ENCODE measurements at regions of chr22 and their contacts with region 1.

Region 1: GRCh38 chr22:23767673-23768548 is at the start of gene CHCHD10:
- DNase-seq: peak; percentile 78
- H3K4me3 Mint-ChIP-seq: peak within 1 kb of the TSS; percentile 75
- H3K27ac Mint-ChIP-seq: peak within 1 kb of the TSS; percentile 67
- H3K4me1 Mint-ChIP-seq: peaks cover 18% of the 10 kb centered on the region
- H3K27me3 Mint-ChIP-seq: peaks cover 2% of the 10 kb centered on the region
- total RNA-seq, gene CHCHD10: 108 and 111 TPM in 2 replicates

Region 2: GRCh38 chr22:23626286-23626975 is 141.5 kb before region 1 on chr22:
- intact Hi-C with region 1: loop called (anchors 2 kb)
- DNase-seq: no peak
- H3K4me3 Mint-ChIP-seq: no peak overlapping the region
- H3K27ac Mint-ChIP-seq: no peak overlapping the region
- H3K4me1 Mint-ChIP-seq: peaks cover 2% of the 10 kb centered on the region
- H3K27me3 Mint-ChIP-seq: no peaks in the 10 kb centered on the region

Region 3: DNA sequence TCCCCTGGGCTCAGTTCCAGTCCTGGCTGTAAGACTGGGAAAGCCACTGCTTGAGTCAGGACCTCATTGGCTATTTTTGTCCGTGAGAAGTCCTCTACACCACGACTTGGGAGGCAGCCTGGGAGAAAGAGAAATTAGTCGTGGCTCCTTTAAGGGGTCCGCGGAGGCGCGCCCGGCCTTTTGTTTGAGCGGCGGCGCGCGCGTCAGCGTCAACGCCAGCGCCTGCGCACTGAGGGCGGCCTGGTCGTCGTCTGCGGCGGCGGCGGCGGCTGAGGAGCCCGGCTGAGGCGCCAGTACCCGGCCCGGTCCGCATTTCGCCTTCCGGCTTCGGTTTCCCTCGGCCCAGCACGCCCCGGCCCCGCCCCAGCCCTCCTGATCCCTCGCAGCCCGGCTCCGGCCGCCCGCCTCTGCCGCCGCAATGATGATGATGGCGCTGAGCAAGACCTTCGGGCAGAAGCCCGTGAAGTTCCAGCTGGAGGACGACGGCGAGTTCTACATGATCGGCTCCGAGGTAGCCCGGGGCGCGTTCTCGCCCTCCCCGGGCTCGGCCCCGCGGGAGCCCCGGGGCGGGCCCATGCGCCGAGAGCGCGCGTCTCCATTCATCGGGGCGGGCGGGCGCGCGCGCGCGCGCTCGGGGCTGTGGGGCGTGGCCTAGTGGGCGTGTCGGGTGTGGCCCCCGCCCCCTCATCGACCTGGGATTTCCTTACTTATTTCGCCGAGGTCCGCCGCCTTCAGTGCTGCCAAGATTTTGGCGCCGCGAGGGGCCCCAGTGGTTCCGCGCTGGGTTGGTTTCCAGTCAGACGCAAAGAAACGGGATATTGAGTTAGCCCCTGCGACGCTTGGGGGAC is 19.1 kb after region 1 on chr22 and contains the start of gene SMARCB1:
- intact Hi-C with region 1: loop called (anchors 2 kb)
- DNase-seq: peak; percentile 82
- H3K4me3 Mint-ChIP-seq: peak within 1 kb of the TSS; percentile 89
- H3K27ac Mint-ChIP-seq: peak within 1 kb of the TSS; percentile 92
- H3K4me1 Mint-ChIP-seq: peaks cover 26% of the 10 kb centered on the region
- H3K27me3 Mint-ChIP-seq: no peaks in the 10 kb centered on the region
- total RNA-seq, gene SMARCB1: 94.1 and 96.4 TPM in 2 replicates

Region 4: GRCh38 chr22:23849009-23850006 is 81.4 kb after region 1 on chr22:
- intact Hi-C with region 1: loop called (anchors 2 kb)
- DNase-seq: peak; percentile 79
- H3K4me3 Mint-ChIP-seq: no peak overlapping the region
- H3K27ac Mint-ChIP-seq: no peak overlapping the region
- H3K4me1 Mint-ChIP-seq: peaks cover 7% of the 10 kb centered on the region
- H3K27me3 Mint-ChIP-seq: peaks cover 10% of the 10 kb centered on the region

Measured in activated T-helper 2 cell treated with anti-CD3 and anti-CD28 coated beads, Interferon-gamma antibody, Interleukin-2, Interleukin-4, amounts not matched to agents 10 μg/mL and 5 μg/mL and 100 μg/mL, durations not matched to agents 14 hours and 24 hours and 36 hours (primary cell).